ENCODE measurements at regions of chr1 and their contacts with region 1.

Region 1: GRCh38 chr1:78068681-78069283 is 23.0 kb downstream of the GIPC2 start:
- DNase-seq: peak; percentile 65 to 73
- ATAC-seq: peak; percentile 82 to 84
- H3K4me3 ChIP-seq: no peak overlapping the region
- H3K27ac ChIP-seq: peak overlapping the region; percentile 77 to 86 (median 82)
- H3K4me1 ChIP-seq: peaks cover 25 to 44% of the 10 kb centered on the region in 2 donors
- H3K27me3 ChIP-seq: no peaks in the 10 kb centered on the region
- CTCF ChIP-seq: no peak
- POLR2A ChIP-seq: no peak

Region 2: DNA sequence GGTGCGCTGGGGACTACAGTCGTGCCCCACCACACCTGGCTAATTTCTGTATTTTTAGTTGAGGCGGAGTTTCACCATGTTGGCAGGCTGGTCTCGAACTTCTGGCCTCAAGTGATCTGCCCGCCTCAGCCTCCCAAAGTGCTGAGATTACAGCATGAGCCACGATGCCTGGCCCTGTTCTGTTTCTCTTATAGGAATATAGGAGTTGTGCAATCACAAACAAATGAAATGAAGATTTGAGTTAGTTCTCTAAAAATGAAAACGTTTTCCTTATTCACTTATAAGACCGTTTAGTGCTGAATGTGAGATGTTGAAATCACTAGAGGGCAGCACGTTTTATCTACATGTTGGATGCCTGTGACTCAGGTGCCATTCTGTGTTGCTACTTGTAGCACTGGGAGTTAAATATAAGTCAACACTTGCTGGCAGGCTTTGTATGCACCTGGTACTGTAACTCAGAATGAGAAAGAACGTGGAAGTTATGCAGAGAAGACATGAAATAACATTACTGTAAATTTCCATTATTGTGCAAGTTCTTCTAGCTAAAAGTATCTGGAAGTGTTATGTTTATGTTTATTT is 243.6 kb before region 1 on chr1:
- in situ Hi-C with region 1: no loop called
- intact Hi-C with region 1: loop called (anchors 5 kb)
- DNase-seq: peak; percentile 90
- ATAC-seq: peak; percentile 88 to 92
- H3K4me3 ChIP-seq: no peak overlapping the region
- H3K27ac ChIP-seq: peak overlapping the region; percentile 91 to 100 (median 97)
- H3K4me1 ChIP-seq: peaks cover 32 to 44% of the 10 kb centered on the region in 2 donors
- H3K27me3 ChIP-seq: no peaks in the 10 kb centered on the region
- CTCF ChIP-seq: peak in 1 of 5 experiments; percentile 11
- POLR2A ChIP-seq: peak in 1 of 2 donors; percentile 7

Region 3: DNA sequence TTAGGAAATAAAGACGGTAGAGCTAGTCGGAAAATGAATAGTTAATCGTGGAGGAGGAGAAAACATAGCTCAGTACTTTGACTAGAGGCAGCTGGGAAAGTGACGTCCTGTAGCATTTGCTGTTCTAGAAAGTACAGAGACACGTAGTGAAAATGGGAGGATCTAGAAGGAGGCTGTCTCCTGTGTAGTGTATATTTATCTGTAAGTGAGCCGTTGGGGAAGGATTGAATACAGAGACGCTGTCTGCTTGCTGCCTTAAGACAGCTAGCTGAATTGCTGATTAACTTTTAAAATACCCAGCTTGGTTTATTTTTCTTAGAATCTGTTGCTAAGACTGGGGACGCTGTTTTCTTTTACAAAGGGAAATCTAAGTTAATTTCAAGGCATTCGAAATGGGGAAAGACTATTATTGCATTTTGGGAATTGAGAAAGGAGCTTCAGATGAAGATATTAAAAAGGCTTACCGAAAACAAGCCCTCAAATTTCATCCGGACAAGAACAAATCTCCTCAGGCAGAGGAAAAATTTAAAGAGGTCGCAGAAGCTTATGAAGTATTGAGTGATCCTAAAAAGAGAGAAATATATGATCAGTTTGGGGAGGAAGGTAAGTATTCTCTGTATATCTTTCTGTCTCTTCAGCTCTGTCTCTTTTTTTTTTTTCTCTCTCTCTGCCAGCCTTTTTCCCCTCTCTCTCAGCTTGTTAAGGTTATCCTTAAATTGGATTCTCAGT is 63.9 kb before region 1 on chr1 and contains the start of gene DNAJB4:
- in situ Hi-C with region 1: no loop called
- intact Hi-C with region 1: loop called (anchors 2 kb)
- DNase-seq: peak; percentile 83 to 84
- ATAC-seq: peak; percentile 99
- H3K4me3 ChIP-seq: peak within 1 kb of the TSS; percentile 65 to 81 (median 70)
- H3K27ac ChIP-seq: peak within 1 kb of the TSS; percentile 83 to 97 (median 91)
- H3K4me1 ChIP-seq: peaks cover 19 to 41% of the 10 kb centered on the region in 2 donors
- H3K27me3 ChIP-seq: no peaks in the 10 kb centered on the region
- CTCF ChIP-seq: peak in 1 of 5 experiments; percentile 13
- POLR2A ChIP-seq: peak; percentile 92 to 100
- total RNA-seq, gene DNAJB4: 35.6 to 84.9 (median 45.3) TPM

Region 4: DNA sequence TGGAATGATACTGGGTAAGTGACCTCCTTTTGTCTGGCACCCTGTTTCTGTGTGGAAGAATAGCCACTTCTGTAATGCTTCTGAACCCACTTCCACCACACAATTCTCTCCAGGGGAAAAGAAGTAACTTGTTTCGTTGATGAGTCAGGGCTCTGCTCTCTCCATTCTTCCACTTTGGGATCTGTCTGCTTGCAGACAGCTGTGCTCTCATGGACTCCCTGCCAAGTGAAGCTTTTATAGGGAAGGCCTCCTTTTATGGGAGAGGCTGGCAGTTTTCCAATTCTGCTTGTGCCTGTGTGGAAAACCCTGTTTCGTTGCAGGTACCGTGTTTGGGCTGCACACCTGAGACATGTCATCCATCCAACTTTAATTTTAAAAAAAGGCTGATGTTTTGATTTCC is 107.7 kb after region 1 on chr1:
- in situ Hi-C with region 1: no loop called
- intact Hi-C with region 1: no loop called
- DNase-seq: peak in 1 of 2 donors; percentile 17
- ATAC-seq: no peak
- H3K4me3 ChIP-seq: no peak overlapping the region
- H3K27ac ChIP-seq: no peak overlapping the region
- H3K4me1 ChIP-seq: no peaks in the 10 kb centered on the region
- H3K27me3 ChIP-seq: no peaks in the 10 kb centered on the region
- CTCF ChIP-seq: no peak
- POLR2A ChIP-seq: no peak

Measured in gastrocnemius medialis (tissue), 4 donors.